GM13976 (cell line): ENCODE measurements at regions of chr1 and their contacts with region 1.

Region 1: DNA sequence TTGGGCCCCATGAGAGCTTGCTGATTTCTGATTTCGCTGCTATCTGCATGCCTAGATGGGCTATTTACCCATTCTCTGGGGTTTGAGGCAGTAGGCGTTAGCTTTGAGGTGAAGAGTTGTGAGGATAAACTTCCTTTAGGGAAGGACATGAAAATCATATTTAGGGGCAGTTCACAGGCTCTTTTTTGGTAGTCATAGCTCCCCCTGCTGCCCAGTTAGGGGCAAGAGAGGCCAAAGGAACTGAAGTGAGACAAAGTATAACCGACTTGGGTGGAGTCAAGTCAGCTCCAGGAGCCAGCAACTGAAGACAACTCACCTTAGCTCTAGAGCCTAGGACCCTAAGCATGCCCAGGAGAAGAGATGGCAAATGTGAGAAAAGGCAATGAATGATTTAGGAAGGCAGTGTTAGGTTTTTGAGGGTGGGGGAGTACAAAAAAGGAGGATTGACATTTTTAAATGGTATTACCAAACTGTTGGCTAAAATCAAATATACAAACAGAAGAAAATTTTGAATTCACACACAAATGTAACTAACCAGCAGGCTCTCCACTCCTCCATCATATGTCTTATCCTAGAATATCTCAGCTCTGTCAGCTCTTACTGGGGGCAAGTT is 625.2 kb downstream of the LMO4 start:
- DNase-seq: peak; percentile 27
- CTCF ChIP-seq: peak; percentile 64

Region 2: DNA sequence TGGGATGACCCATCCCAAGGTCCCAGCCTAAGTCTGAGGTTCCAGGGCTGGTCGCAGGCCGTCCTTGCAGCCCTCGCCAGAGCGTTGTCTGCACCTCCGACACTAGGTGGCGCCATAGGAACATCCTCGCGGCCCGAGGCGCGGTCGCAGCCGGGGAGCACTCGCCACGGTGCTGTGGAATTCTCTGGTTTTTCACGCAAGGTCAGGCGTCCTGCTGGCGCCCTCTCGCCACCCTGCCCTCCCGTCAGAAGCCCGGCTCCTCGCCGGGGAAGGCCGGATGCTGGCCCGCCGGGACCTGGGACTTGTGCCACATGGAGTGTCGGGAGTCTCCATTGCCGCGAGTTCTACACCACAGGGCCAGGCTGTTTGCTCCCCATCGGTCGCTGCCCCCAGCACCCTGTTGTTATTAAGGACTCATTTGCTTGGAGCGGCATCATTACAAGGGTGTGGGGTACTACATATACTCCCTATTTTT is 822.0 kb before region 1 on chr1:
- in situ Hi-C with region 1: loop called (anchors 25 kb)
- DNase-seq: peak; percentile 88
- CTCF ChIP-seq: peak; percentile 99

Region 3: GRCh38 chr1:87842156-87842555 is 111.7 kb before region 1 on chr1:
- in situ Hi-C with region 1: no loop called
- DNase-seq: no peak
- CTCF ChIP-seq: no peak

Region 4: DNA sequence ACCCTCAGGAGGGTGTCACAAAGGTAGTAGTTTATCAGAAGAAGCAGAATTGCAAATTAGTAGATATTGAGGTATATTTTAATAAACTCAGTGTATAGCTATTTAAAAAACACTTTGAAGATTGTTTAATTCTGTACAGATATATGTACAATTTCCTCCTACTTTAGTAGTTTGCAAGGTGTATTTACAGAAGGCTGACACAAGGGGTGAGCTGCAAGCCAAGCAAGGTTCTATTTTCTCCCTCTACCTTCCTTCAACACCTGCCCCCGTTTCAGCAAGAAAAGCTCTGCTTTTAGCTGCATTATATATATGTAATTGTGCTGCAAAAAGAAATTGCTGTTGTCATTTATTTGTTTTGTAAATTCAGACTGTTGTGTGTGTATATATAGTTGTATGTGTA is 56.1 kb after region 1 on chr1:
- in situ Hi-C with region 1: no loop called
- DNase-seq: no peak
- CTCF ChIP-seq: no peak